Ascending aorta (tissue), 2 donors: ENCODE measurements at regions of chr10 and their contacts with region 1.

Region 1: GRCh38 chr10:119596537-119597404 is at the start of gene TIAL1:
- DNase-seq: peak; percentile 97 to 99
- H3K4me3 ChIP-seq: peak within 1 kb of the TSS; percentile 64 to 70
- H3K27ac ChIP-seq: peak within 1 kb of the TSS; percentile 95 to 98
- H3K4me1 ChIP-seq: peaks cover 0 to 31% of the 10 kb centered on the region in 2 donors
- H3K27me3 ChIP-seq: no peaks in the 10 kb centered on the region
- CTCF ChIP-seq: no peak
- total RNA-seq, gene TIAL1: 35.5 TPM

Region 2: GRCh38 chr10:119103903-119104652 is 492.7 kb before region 1 on chr10 and contains the start of gene DENND10:
- intact Hi-C with region 1: loop called (anchors 5 kb)
- DNase-seq: peak; percentile 13 to 87
- H3K4me3 ChIP-seq: peak within 1 kb of the TSS; percentile 98 to 100
- H3K27ac ChIP-seq: peak within 1 kb of the TSS; percentile 43 to 76
- H3K4me1 ChIP-seq: no peaks in the 10 kb centered on the region
- H3K27me3 ChIP-seq: no peaks in the 10 kb centered on the region
- CTCF ChIP-seq: no peak
- total RNA-seq, gene DENND10: 85.1 TPM

Region 3: GRCh38 chr10:119178372-119179119 is 418.2 kb before region 1 on chr10 and contains the start of gene PRDX3:
- intact Hi-C with region 1: loop called (anchors 10 kb)
- DNase-seq: peak; percentile 72 to 95
- H3K4me3 ChIP-seq: peak within 1 kb of the TSS; percentile 66 to 81
- H3K27ac ChIP-seq: peak within 1 kb of the TSS; percentile 72 to 91
- H3K4me1 ChIP-seq: peaks cover 0 to 7% of the 10 kb centered on the region in 2 donors
- H3K27me3 ChIP-seq: no peaks in the 10 kb centered on the region
- CTCF ChIP-seq: peak in 2 of 3 experiments; percentile 13 to 19
- total RNA-seq, gene PRDX3: 34.9 TPM

Region 4: DNA sequence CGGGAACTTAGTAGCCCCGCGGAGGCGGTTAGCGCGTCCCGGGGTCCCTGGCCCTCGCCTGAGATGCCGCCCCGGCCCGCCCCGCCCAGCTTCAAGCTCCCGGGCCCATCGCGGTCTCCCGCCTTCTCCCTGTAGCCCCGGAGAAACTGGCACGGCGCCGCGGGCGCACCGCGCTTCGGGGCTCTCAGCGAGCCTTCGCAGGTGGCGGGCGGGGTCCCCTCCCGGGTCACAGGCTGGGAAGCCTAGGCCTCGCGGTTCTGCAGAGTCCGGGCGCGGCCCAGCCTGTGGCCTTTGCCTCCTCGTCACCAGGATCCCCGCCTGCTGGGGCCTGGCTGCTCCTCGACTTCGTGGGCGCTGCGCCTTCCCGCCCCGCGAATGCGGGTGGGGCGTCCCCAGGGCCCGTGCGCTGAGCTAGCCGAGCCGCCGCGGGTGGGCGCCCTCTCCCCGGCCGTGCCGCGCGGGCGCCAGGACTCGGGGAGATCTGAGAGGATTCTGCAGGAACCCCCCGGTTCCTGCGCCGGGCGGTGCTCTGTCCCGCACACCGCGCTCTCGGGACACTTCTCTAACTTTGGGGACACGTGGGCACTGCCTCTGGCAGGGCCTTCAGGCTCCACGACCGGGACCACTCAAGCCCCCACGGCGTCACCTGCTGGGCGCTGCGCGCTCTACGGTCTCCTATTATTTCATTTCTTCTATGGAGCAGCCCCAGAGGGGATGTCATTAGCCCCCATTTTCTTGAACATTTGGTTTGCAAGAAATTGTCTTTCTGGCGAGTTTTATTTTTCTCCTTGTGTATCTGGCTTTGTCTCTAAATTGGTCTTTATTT is 53.6 kb before region 1 on chr10:
- intact Hi-C with region 1: loop called (anchors 5 kb)
- DNase-seq: peak in 1 of 2 donors; percentile 71
- H3K4me3 ChIP-seq: peak overlapping the region; percentile 85 to 89
- H3K27ac ChIP-seq: peak overlapping the region; percentile 58 to 79
- H3K4me1 ChIP-seq: peaks cover 0 to 10% of the 10 kb centered on the region in 2 donors
- H3K27me3 ChIP-seq: no peaks in the 10 kb centered on the region
- CTCF ChIP-seq: peak in 2 of 3 experiments; percentile 40 to 66

Region 5: GRCh38 chr10:119725828-119726675 is 129.3 kb after region 1 on chr10 and contains the start of gene INPP5F:
- intact Hi-C with region 1: loop called (anchors 2 kb)
- DNase-seq: peak; percentile 94 to 99
- H3K4me3 ChIP-seq: peak within 1 kb of the TSS; percentile 86 to 94
- H3K27ac ChIP-seq: peak within 1 kb of the TSS; percentile 93 to 94
- H3K4me1 ChIP-seq: peaks cover 7 to 14% of the 10 kb centered on the region in 2 donors
- H3K27me3 ChIP-seq: no peaks in the 10 kb centered on the region
- CTCF ChIP-seq: peak; percentile 24 to 49 (median 34)
- total RNA-seq, gene INPP5F: 5.1 TPM

Region 6: DNA sequence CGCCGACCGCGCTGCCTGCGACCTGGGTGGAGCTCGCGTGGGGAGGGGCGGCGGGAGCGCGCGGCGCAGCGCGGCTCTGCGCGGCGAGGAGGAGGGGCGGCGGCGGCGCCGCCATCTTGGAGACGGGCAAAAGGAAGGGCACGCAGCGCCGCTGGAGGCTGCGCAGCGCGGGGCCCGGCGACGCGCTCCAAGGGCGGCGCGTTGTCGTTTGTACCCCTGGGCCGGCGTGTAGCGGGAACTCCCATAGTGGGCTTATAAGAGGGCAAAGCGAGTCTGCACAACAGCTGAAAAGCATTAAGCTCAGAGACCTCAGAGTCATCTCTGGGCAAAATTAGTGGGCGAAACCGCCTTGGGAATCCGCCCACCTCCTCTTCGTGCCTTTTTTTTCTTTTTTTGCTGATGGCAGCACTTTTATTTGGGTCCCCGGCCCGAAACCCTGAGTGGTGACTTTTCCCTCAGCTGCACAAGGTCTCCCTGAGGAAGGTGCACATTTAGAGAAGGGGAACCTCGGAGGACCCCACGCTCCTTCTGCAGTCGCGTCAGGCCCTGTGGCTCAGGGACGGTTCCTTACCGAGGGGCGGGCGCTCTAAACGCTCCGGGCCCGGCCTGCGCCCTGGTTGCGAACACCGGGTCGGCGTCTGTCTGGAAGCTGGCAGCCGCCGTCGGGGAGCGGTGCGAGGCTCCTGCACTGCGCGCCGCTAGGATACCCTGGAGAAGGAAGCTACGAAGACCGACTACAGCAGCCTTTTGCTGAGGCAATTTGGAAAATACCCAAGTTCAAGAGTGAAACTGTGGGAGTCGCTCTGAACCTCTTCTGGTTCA is 276.3 kb after region 1 on chr10:
- intact Hi-C with region 1: loop called (anchors 5 kb)
- DNase-seq: peak; percentile 30 to 91
- H3K4me3 ChIP-seq: peak overlapping the region; percentile 72 to 91
- H3K27ac ChIP-seq: peak overlapping the region; percentile 85 to 90
- H3K4me1 ChIP-seq: peaks cover 0 to 18% of the 10 kb centered on the region in 2 donors
- H3K27me3 ChIP-seq: no peaks in the 10 kb centered on the region
- CTCF ChIP-seq: no peak

Region 7: DNA sequence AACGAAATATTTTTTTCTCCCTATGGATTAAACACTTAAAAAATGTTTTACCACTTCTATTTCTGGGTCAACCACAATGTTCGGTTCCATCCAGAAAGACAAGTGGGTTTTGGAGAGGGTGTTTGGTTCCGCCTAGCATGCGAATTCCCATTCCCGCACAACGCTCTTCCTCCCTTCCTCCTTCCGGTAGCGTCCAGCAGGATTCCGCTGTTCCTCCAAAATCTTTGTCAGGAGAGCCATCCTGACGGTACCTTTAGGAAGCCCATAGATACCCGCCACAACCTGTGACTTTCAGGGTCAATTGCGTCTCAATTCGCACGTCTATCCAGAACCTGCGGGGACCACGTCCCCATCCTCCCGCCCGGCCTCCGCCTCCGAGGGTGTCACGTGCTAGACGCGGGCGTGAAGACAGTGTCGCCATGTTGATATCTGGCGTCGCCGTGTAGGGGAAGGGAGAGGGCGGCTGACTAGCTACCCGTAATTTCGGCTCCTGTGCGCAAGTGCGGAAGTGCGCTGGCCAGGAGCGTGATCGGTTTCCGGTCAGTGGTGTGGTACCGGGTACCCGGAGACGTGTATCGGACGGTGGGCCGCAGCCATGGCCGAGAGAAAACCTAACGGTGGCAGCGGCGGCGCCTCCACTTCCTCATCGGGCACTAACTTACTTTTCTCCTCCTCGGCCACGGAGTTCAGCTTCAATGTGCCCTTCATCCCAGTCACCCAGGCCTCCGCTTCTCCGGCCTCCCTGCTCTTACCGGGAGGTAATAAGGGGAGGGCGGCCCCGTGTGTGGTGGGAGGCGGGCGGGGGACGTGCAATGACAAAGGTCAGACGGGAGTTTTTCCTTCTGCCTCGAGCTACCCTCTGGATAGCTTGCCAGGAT is 295.7 kb after region 1 on chr10 and contains the start of gene SEC23IP:
- intact Hi-C with region 1: loop called (anchors 2 kb)
- DNase-seq: peak; percentile 87 to 98
- H3K4me3 ChIP-seq: peak within 1 kb of the TSS; percentile 69 to 94
- H3K27ac ChIP-seq: peak within 1 kb of the TSS; percentile 81 to 90
- H3K4me1 ChIP-seq: peaks cover 13 to 23% of the 10 kb centered on the region in 2 donors
- H3K27me3 ChIP-seq: no peaks in the 10 kb centered on the region
- CTCF ChIP-seq: no peak
- total RNA-seq, gene SEC23IP: 17.1 TPM